Activated CD4-positive, alpha-beta T cell treated with anti-CD3 and anti-CD28 coated beads for 36 hours (primary cell): ENCODE measurements at regions of chr9 and their contacts with region 1.

Region 1: DNA sequence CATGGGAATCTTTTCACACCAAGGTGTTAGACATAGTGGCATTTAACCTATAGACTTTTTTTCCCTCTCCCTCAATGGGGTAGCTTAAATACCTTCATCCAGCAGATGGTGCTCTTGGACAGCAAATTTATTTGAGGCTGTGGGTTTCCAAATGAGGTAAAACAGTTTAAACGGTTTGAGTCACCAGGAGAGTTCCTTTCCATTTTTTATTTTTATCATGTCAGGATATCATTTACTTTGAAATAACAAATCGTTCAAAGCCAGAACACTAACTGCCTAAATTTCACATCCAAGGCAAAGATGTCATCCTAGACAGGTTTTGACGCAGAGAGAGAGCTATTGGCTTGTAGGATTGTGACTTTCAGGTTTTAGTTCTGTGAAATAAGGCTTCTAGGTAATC is 69.7 kb downstream of the KDM4C start:
- DNase-seq: peak; percentile 54
- ATAC-seq: peak; percentile 79
- H3K4me3 Mint-ChIP-seq: no peak overlapping the region
- H3K27ac Mint-ChIP-seq: peak overlapping the region; percentile 62
- H3K4me1 Mint-ChIP-seq: peaks cover 9% of the 10 kb centered on the region
- H3K27me3 Mint-ChIP-seq: no peaks in the 10 kb centered on the region

Region 2: GRCh38 chr9:6811436-6811835 is 16.0 kb before region 1 on chr9:
- CTCF ChIA-PET with region 1: interaction called, 15 read pairs
- POLR2A ChIA-PET with region 1: no interaction called
- intact Hi-C with region 1: no loop called
- DNase-seq: no peak
- ATAC-seq: no peak
- H3K4me3 Mint-ChIP-seq: no peak overlapping the region
- H3K27ac Mint-ChIP-seq: no peak overlapping the region
- H3K4me1 Mint-ChIP-seq: peaks cover 3% of the 10 kb centered on the region
- H3K27me3 Mint-ChIP-seq: no peaks in the 10 kb centered on the region

Region 3: DNA sequence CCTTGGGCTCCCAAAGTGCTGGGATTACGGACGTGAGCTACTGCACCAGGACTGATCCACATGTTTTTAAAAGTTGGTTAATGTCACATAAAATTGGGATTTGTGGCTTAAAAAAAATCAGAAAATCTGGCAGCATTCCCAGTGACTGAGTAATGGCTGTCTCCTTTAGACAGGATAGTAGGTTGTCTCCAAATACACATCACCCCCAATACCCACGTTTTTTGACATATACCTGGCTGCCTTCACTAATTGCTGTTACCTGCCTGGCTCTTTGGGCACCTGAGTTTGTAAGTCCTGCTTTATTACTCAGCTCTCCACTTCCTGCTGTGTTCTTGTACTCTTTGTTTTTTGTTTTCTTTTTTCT is 15.1 kb after region 1 on chr9:
- CTCF ChIA-PET with region 1: interaction called, 28 read pairs
- POLR2A ChIA-PET with region 1: no interaction called
- intact Hi-C with region 1: no loop called
- DNase-seq: no peak
- ATAC-seq: no peak
- H3K4me3 Mint-ChIP-seq: no peak overlapping the region
- H3K27ac Mint-ChIP-seq: no peak overlapping the region
- H3K4me1 Mint-ChIP-seq: peaks cover 2% of the 10 kb centered on the region
- H3K27me3 Mint-ChIP-seq: no peaks in the 10 kb centered on the region

Region 4: DNA sequence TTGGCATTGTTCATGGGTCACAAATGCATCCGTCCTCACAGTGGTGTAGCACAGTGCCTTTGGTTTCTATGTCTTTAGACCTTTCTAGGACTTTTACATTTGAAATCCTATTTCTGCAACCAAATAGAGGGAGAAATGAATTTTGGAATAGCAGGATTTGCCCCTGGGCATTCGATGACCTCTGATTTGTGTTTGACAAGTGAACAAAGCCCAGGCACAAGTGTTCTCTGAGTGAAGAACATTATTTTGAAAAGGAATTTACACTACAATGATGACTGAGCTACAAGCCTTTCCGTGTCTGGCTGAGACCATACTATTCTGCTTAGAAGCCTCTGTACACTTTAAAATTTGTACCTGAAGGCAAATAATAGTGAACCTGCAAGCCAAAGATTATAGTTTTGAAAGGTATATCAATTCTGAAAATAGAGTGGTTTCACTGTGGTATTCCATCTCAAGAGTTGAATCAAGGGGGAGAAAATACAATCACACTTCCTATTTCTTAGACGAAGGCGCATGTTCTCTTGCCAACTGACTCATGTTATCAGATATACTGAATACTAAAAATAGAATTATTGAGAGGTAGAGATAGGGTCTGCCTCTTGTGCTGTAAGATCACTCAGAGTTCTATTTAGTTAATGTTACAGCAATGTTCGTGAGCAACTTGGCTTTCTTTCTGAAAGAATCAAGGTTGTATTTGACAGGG is 227.9 kb after region 1 on chr9:
- CTCF ChIA-PET with region 1: interaction called, 5 read pairs
- POLR2A ChIA-PET with region 1: no interaction called
- intact Hi-C with region 1: loop called in 1 of 2 experiments (anchors 2 kb)
- DNase-seq: no peak
- ATAC-seq: peak; percentile 30
- H3K4me3 Mint-ChIP-seq: no peak overlapping the region
- H3K27ac Mint-ChIP-seq: no peak overlapping the region
- H3K4me1 Mint-ChIP-seq: peaks cover 11% of the 10 kb centered on the region
- H3K27me3 Mint-ChIP-seq: no peaks in the 10 kb centered on the region

Region 5: DNA sequence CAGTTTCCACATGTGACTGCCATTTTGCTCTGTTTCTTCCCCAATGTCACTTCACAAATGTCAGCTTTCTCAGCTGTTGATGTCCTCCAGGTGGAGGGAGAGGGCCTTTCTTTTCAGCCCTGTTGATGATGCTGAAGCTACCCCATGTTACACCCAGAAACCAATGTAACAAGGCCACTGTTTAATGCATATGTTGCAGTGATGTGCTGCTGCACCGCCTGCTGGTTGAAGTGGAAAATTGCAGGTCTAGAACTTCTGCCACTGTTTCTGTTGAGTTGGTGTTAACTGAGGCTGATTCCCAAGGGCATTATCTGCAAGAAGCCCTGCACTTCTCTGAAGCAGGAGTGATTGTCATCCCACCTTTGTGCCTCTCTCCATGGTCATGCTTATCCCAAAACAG is 358.7 kb after region 1 on chr9:
- CTCF ChIA-PET with region 1: interaction called, 5 read pairs
- POLR2A ChIA-PET with region 1: no interaction called
- intact Hi-C with region 1: loop called in 1 of 2 experiments (anchors 1 kb)
- DNase-seq: peak; percentile 22
- ATAC-seq: no peak
- H3K4me3 Mint-ChIP-seq: no peak overlapping the region
- H3K27ac Mint-ChIP-seq: no peak overlapping the region
- H3K4me1 Mint-ChIP-seq: no peaks in the 10 kb centered on the region
- H3K27me3 Mint-ChIP-seq: no peaks in the 10 kb centered on the region

Region 6: DNA sequence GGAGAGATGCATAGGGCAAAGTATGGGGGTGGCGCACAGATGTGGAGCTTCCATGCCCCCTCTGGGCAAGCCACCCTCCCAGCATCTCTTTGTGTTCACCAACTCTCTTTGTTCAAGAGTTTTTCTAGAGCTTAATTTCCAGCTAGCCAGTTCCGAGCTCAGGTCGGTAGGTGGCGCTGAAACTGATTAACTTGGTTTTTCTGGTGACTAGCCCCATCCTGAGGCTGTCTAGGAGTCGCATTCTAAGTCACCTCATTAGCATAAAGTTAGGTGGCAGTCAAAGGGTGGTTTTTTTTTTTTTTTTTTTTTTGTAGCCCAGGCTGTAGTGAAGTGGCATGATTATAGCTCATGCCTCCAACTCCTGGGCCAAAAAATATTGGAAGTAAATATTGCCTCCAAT is 406.7 kb after region 1 on chr9:
- CTCF ChIA-PET with region 1: no interaction called
- POLR2A ChIA-PET with region 1: no interaction called
- intact Hi-C with region 1: loop called in 1 of 2 experiments (anchors 10 kb)
- DNase-seq: peak; percentile 76
- ATAC-seq: peak; percentile 96
- H3K4me3 Mint-ChIP-seq: no peak overlapping the region
- H3K27ac Mint-ChIP-seq: no peak overlapping the region
- H3K4me1 Mint-ChIP-seq: no peaks in the 10 kb centered on the region
- H3K27me3 Mint-ChIP-seq: peaks cover 12% of the 10 kb centered on the region